ENCODE measurements at regions of chr6 and their contacts with region 1.

Region 1: DNA sequence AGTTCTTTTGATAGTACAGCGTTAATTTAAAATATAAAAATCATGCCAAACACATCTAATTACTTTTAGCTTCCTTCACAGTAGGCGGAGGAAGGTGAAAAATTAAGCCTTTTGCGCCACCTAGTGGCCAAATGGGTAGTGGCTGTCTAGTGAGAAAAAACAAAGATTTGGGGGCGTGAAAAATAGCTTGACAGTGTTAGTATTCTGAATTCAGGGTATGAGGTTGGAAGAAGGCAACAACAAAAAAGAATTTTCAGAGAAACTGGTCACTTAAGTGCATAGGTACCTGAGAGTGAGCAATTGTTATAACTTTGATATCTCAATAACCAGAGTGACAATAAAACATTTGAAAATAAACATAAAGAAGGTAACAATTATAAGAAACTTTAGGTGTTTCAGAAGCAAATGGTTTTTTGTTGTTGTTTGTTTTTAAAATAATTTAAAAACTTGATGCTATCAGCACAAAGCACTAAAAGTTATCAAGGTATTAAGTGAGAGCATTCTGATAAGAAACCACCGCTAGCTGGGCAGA is 14.3 kb downstream of the PSMB9 start:
- DNase-seq: peak; percentile 83
- H3K4me3 ChIP-seq: no peak overlapping the region
- H3K27ac ChIP-seq: no peak overlapping the region
- H3K4me1 ChIP-seq: no peaks in the 10 kb centered on the region
- H3K27me3 ChIP-seq: peaks cover 33 to 58% of the 10 kb centered on the region in 2 experiments
- CTCF ChIP-seq: peak; percentile 69 to 72
- POLR2A ChIP-seq: no peak

Region 2: DNA sequence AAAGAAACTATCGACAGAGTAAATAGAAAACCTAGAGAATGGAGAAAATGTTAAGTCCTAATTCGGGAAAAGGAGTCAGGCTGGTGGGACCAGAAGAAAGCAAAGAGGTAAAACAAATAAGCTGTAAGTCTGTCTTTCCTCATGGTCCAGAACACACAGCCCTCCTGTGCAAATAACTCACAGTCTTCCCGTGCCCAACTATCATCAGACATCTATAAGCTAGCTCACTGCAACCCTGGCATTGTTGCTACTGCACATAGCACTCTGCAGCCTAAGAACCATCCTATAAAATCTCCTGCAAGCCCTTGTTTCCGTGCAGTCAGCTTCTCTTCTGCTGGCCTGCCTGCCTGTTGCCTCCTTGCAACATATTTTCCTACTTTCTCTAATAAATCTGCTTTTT is 411.3 kb before region 1 on chr6:
- CTCF ChIA-PET with region 1: no interaction called
- POLR2A ChIA-PET with region 1: no interaction called
- dilution Hi-C with region 1: no loop called
- intact Hi-C with region 1: no loop called
- DNase-seq: no peak
- H3K4me3 ChIP-seq: no peak overlapping the region
- H3K27ac ChIP-seq: no peak overlapping the region
- H3K4me1 ChIP-seq: no peaks in the 10 kb centered on the region
- H3K27me3 ChIP-seq: peaks cover 6 to 7% of the 10 kb centered on the region in 2 experiments
- CTCF ChIP-seq: no peak
- POLR2A ChIP-seq: no peak

Region 3: GRCh38 chr6:32622545-32623401 is 245.6 kb before region 1 on chr6:
- CTCF ChIA-PET with region 1: interaction called, 37 read pairs
- POLR2A ChIA-PET with region 1: no interaction called
- dilution Hi-C with region 1: no loop called
- intact Hi-C with region 1: loop called (anchors 1 kb)
- DNase-seq: no peak
- H3K4me3 ChIP-seq: no peak overlapping the region
- H3K27ac ChIP-seq: no peak overlapping the region
- H3K4me1 ChIP-seq: no peaks in the 10 kb centered on the region
- H3K27me3 ChIP-seq: no peaks in the 10 kb centered on the region
- CTCF ChIP-seq: peak in 1 of 2 donors; percentile 14
- POLR2A ChIP-seq: no peak

Region 4: GRCh38 chr6:32774426-32774825 is 93.9 kb before region 1 on chr6:
- CTCF ChIA-PET with region 1: no interaction called
- POLR2A ChIA-PET with region 1: no interaction called
- dilution Hi-C with region 1: no loop called
- intact Hi-C with region 1: no loop called
- DNase-seq: no peak
- H3K4me3 ChIP-seq: no peak overlapping the region
- H3K27ac ChIP-seq: no peak overlapping the region
- H3K4me1 ChIP-seq: no peaks in the 10 kb centered on the region
- H3K27me3 ChIP-seq: peaks cover 21 to 28% of the 10 kb centered on the region in 2 experiments
- CTCF ChIP-seq: no peak
- POLR2A ChIP-seq: no peak

Region 5: DNA sequence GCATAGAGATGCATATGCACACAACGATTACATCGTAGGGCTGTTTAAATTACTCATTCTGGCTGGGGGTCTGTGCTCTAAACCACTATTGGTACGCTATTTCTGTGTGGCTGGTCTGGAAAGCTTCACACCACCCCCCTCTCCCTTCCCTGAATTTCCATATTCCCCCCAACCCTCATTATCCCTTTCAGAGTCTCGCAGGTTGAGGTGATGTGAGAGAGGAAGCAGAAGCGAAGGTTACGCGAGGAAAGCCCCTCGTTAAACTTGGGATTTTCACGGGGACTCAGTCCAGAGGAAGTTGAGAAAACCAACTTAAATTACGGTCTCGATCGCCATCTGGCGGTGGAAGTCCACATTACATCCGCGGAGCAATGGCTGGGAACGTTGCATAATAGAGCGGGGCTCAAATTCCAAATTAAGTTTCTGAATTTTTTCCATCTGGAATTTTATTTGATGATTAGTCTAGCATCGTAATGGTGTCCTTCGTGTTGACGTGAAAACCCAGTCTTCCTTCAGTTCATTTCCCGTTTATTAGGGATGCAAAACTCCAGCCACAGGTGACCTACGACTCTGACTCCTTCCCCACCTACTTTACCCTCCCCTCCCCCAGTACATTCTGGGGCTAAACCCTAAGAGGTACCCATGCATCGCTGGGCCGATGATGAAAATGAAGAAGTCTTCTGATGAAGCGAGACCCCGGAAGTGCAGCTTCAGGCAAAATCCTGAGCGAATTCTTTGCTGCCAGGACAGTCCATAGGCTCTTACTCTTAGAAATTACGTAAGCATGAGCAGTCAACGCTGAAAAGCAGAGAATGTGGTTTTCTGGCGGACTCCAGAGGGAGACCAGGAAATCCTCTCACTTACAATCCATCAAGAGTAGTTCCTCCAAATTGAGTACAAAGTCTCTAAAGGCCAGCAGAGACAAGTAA is 71.2 kb before region 1 on chr6:
- CTCF ChIA-PET with region 1: interaction called, 63 read pairs
- POLR2A ChIA-PET with region 1: no interaction called
- dilution Hi-C with region 1: no loop called
- intact Hi-C with region 1: loop called (anchors 1 kb)
- DNase-seq: peak; percentile 65
- H3K4me3 ChIP-seq: peak overlapping the region in 1 of 3 experiments; percentile 19
- H3K27ac ChIP-seq: no peak overlapping the region
- H3K4me1 ChIP-seq: no peaks in the 10 kb centered on the region
- H3K27me3 ChIP-seq: peaks cover 40 to 67% of the 10 kb centered on the region in 2 experiments
- CTCF ChIP-seq: peak; percentile 77 to 82
- POLR2A ChIP-seq: no peak

Region 6: DNA sequence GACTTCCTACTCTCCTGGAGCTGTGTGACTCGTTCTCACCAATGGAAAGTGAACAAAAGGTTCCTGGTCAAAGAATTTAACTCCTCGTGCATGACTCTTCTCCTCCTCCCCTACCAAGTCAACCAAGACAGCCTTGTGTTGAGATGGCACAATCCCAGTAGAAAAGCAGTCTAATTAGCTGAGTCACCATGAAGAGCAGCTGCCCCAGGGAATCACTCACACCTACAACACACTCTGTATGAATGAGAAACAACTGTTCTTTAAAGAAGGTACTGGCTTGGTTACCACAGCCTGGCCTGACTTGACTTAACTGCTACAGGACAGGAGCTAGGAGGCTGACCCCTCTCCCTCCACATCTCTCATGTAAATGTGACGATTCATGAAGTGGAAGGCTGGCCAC is 48.6 kb before region 1 on chr6:
- CTCF ChIA-PET with region 1: interaction called, 188 read pairs
- POLR2A ChIA-PET with region 1: no interaction called
- dilution Hi-C with region 1: no loop called
- intact Hi-C with region 1: no loop called
- DNase-seq: no peak
- H3K4me3 ChIP-seq: no peak overlapping the region
- H3K27ac ChIP-seq: no peak overlapping the region
- H3K4me1 ChIP-seq: no peaks in the 10 kb centered on the region
- H3K27me3 ChIP-seq: peaks cover 0 to 4% of the 10 kb centered on the region in 2 experiments
- CTCF ChIP-seq: no peak
- POLR2A ChIP-seq: no peak

Region 7: DNA sequence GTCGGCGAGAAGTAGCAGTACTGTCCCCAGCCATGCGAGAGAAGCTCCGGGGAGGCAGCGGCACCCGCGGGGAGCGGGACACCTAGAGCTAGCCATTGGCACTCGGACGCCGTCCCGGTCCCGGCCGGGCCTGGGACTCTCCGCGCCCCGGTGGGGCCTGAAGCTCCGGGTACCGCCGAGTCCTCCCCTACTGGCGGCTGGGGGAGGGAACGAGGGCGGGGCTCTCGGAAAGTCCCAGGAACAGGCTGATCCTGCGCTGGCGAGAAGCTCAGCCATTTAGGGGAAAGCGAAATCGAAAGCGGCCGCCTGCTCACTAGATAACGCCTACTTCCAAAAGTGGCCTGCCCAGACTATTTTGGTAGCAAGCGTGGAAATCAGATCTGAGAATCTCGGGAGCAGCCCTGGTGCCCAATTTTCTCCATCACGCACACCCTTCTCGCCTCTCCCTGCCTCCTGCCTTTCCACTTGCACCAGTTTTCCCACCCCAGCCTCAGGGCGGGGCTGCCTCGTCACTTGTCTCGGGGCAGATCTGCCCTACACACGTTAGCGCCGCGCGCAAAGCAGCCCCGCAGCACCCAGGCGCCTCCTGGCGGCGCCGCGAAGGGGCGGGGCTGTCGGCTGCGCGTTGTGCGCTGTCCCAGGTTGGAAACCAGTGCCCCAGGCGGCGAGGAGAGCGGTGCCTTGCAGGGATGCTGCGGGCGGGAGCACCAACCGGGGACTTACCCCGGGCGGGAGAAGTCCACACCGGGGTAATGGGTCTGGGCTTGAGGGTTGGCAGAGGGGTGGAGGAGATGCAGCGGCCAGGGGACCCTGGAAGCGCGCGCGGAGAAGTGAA is 14.6 kb before region 1 on chr6 and contains the starts of genes PSMB9 and TAP1:
- CTCF ChIA-PET with region 1: interaction called, 158 read pairs
- POLR2A ChIA-PET with region 1: interaction called, 8 read pairs
- dilution Hi-C with region 1: no loop called
- intact Hi-C with region 1: no loop called
- DNase-seq: peak; percentile 96
- H3K4me3 ChIP-seq: peak within 1 kb of the TSS; percentile 63 to 83 (median 75)
- H3K27ac ChIP-seq: peak within 1 kb of the TSS; percentile 18
- H3K4me1 ChIP-seq: peaks cover 13% of the 10 kb centered on the region
- H3K27me3 ChIP-seq: peaks cover 2 to 15% of the 10 kb centered on the region in 2 experiments
- CTCF ChIP-seq: peak; percentile 82 to 86
- POLR2A ChIP-seq: peak; percentile 64
- total RNA-seq, gene PSMB9: 2.7 and 6.3 TPM in 2 replicates
- total RNA-seq, gene TAP1: 18.8 and 25.9 TPM in 2 replicates

Region 8: DNA sequence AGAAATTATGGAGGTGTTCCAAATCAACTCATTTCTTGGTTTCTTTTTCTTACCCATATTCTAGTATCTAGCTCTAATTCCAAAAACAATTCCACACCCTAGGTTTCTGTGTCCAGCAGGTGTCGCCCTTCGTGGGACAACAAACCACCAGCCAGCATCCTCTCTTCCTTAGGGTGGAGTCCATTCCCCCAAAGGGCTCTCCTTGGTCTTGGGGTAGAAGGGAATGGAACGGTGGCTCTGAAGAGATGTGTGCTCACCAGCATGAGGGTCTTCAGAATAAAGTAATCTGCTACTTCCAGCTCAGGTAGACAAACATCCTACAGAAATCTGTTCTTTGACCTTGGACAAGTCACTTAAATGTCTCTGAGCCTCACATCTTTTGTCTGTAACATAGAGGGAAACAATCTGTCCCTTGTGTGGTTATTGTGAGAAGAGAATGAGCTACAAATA is 65.3 kb after region 1 on chr6:
- CTCF ChIA-PET with region 1: interaction called, 13 read pairs
- POLR2A ChIA-PET with region 1: no interaction called
- dilution Hi-C with region 1: no loop called
- intact Hi-C with region 1: no loop called
- DNase-seq: peak; percentile 76
- H3K4me3 ChIP-seq: no peak overlapping the region
- H3K27ac ChIP-seq: no peak overlapping the region
- H3K4me1 ChIP-seq: no peaks in the 10 kb centered on the region
- H3K27me3 ChIP-seq: peaks cover 41 to 73% of the 10 kb centered on the region in 2 experiments
- CTCF ChIP-seq: peak; percentile 73
- POLR2A ChIP-seq: no peak

Measured in endothelial cell of umbilical vein (primary cell).